ENCODE measurements at regions of chrX and their contacts with region 1.

Region 1: GRCh38 chrX:69808375-69808774 is 192.5 kb downstream of the EDA start:
- DNase-seq: peak; percentile 13
- H3K4me3 Mint-ChIP-seq: no peak overlapping the region
- H3K27ac Mint-ChIP-seq: no peak overlapping the region
- H3K4me1 Mint-ChIP-seq: peaks cover 11% of the 10 kb centered on the region
- H3K27me3 Mint-ChIP-seq: no peaks in the 10 kb centered on the region

Region 2: GRCh38 chrX:69793260-69793935 is 15.0 kb before region 1 on chrX:
- CTCF ChIA-PET with region 1: no interaction called
- intact Hi-C with region 1: loop called (anchors 2 kb)
- DNase-seq: no peak
- H3K4me3 Mint-ChIP-seq: no peak overlapping the region
- H3K27ac Mint-ChIP-seq: no peak overlapping the region
- H3K4me1 Mint-ChIP-seq: peaks cover 3% of the 10 kb centered on the region
- H3K27me3 Mint-ChIP-seq: no peaks in the 10 kb centered on the region